Heart left ventricle (tissue), 16 donors: ENCODE measurements at regions of chr7 and their contacts with region 1.

Region 1: GRCh38 chr7:101085162-101085987 is at the start of gene TRIM56:
- DNase-seq: peak; percentile 87 to 92 (median 91)
- ATAC-seq: peak; percentile 94 to 96 (median 95)
- H3K4me3 ChIP-seq: peak within 1 kb of the TSS; percentile 45 to 94 (median 85)
- H3K27ac ChIP-seq: peak within 1 kb of the TSS; percentile 85 to 99 (median 96)
- H3K4me1 ChIP-seq: peaks cover 8 to 49% (median 25%) of the 10 kb centered on the region in 12 donors
- H3K27me3 ChIP-seq: no peaks in the 10 kb centered on the region
- CTCF ChIP-seq: peak in 1 of 12 donors; percentile 1
- POLR2A ChIP-seq: peak in 1 of 2 donors; percentile 45
- total RNA-seq, gene TRIM56: 7.9 to 37.4 (median 14.7) TPM

Region 2: DNA sequence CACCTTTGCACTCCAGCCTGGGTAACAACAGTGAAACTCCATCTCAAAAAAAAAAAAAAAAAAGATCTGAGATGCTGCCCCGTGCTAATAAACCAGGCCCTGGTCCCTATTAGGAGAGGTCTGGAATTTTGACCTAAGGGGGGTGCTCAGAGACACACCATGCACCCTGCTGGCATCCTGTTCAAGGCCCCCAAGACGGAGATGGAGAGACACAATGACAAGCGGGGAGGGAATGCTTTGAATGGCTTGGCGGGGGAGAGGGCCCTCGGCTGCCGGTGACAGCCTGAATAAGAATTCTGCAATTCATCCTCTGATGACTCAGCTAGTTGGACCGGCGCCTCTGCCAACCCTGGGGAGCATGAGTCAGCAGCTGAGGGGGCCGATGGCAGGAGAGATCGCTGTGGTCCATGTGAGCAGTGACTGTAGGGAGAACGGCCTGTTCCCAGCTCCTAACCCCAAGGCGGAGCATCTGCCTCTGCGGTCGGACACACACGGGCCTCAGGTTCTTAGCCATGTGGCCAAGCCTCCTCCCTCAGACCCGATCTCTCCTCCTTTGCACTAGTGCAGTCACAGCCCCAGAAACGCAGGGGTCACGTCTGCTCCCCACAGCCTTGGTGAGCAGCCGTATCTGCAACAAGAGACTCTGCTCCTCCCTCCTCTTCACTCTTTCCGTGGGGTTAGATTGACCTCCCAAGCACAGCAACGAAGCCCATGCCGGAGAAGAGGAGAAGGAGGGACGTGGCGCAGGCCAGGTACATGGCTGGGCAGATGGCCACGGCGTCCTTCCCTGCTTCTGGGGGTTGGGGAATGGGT is 14.8 kb after region 1 on chr7:
- intact Hi-C with region 1: loop called in 1 of 10 experiments (anchors 1 kb)
- DNase-seq: peak; percentile 86 to 95 (median 92)
- ATAC-seq: peak; percentile 94 to 98 (median 96)
- H3K4me3 ChIP-seq: no peak overlapping the region
- H3K27ac ChIP-seq: peak overlapping the region in 10 of 12 donors; percentile 34 to 80 (median 58)
- H3K4me1 ChIP-seq: peaks cover under 1 to 43% (median 21%) of the 10 kb centered on the region in 12 donors
- H3K27me3 ChIP-seq: no peaks in the 10 kb centered on the region
- CTCF ChIP-seq: peak in 1 of 12 donors; percentile 19
- POLR2A ChIP-seq: peak in 1 of 2 donors; percentile 14